ENCODE measurements at regions of chr6 and their contacts with region 1.

Region 1: DNA sequence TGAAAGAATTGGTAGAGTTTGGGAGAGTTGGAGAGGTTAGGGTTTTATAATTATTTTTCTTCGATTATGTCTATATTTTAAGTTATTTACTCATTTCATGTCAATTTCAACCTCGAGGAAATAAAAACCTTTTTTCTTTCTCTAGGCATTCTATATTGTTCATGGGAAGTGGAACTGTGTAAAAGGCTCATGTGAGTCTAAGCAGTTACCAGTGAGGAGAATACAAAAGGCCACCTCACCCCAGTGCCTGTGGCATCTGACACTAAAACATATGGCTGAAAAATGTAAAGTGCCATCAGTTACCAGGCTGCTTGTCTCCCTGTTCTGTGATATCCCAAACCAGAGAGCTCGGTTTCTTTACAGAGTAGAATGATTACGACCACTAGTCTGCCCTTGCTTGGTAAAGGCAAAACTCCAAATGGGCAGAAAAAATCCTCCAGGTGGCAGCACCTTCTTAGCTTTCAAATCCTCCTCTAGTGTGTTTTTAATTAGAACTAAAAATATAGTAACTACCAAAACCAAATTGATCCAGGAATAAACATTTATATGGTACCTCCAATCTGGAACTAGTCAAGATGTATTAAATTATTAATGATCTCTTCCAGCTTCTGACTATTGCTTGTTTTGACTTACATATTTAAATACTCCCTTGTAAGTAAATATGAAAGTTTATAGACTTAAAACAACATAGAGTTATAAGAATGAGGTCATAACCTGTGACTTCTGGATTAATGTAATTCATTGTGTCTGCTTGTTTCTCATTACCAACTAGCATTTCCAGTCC is 122.6 kb upstream of the MCHR2 start:
- DNase-seq: peak; percentile 68
- H3K4me3 ChIP-seq: no peak overlapping the region
- H3K27ac ChIP-seq: no peak overlapping the region
- H3K4me1 ChIP-seq: no peaks in the 10 kb centered on the region
- H3K27me3 ChIP-seq: peaks cover 5% of the 10 kb centered on the region
- CTCF ChIP-seq: peak; percentile 75

Region 2: DNA sequence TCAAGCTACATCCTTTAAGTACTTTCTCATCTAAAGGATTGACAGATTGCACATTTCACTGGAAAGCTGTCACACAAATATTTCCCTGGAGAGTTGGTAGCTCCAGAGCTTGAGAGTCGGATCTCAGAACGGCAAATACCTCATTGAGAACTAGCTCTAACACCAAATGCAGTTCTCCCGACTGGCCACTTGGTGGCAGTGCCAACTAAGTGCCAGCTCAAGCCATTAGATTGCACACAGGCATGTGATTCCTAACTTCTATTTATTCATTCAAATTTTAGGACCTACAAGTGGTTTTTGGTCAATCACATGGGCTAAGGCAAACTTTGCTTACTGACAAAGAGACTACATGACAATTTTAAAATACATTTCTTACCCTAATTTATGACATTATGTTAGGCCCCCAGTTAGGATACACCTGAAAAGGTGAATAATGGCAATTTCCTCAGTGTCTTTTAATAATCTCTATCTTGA is 114.7 kb before region 1 on chr6:
- CTCF ChIA-PET with region 1: no interaction called
- POLR2A ChIA-PET with region 1: no interaction called
- intact Hi-C with region 1: no loop called
- DNase-seq: peak; percentile 71
- H3K4me3 ChIP-seq: no peak overlapping the region
- H3K27ac ChIP-seq: no peak overlapping the region
- H3K4me1 ChIP-seq: no peaks in the 10 kb centered on the region
- H3K27me3 ChIP-seq: peaks cover 12% of the 10 kb centered on the region
- CTCF ChIP-seq: peak; percentile 90

Region 3: DNA sequence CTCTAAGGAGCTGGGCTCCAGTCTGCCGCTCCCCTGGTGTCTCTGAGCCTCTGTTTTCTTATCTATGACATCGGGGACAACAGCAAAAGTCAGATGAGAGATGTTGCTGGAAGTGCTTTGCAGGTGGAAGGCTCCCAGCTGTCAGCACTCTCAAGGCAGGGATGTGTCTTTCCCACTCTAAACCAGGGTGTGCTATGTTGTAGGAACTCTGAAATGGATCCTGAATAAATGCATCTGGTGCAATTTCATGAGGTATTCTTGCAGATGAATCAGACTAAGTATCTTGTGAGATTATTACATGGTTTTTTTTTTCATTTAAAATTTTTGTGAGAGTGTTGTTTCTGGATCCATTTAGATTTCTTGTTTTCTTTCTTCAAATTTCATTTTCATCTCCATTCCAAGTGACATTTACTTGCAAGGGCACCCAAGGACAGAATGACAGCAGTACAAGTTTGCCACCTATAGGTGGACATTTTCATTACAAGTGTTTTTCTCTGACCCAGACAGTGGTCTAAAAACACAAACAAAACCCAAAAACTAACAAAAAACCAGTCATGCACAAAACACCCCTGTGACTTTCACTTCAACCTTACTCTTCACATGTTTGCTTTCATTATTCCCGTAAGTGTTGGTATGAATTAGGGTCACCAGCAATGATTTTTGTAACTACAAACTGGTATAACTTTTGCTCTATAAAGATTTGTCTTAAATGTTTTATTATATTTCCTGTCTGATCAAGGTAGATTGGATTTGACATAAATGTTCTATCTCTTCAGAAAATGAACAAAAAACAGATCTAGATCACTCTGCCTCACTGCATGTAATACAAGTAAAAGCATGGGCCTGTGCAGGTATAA is 362.8 kb after region 1 on chr6:
- CTCF ChIA-PET with region 1: interaction called, 3 read pairs
- POLR2A ChIA-PET with region 1: no interaction called
- intact Hi-C with region 1: loop called (anchors 1 kb)
- DNase-seq: peak; percentile 49
- H3K4me3 ChIP-seq: no peak overlapping the region
- H3K27ac ChIP-seq: no peak overlapping the region
- H3K4me1 ChIP-seq: no peaks in the 10 kb centered on the region
- H3K27me3 ChIP-seq: no peaks in the 10 kb centered on the region
- CTCF ChIP-seq: peak; percentile 79

Region 4: GRCh38 chr6:100573167-100573566 is 456.6 kb after region 1 on chr6:
- CTCF ChIA-PET with region 1: no interaction called
- POLR2A ChIA-PET with region 1: no interaction called
- intact Hi-C with region 1: loop called (anchors 10 kb)
- DNase-seq: peak; percentile 51
- H3K4me3 ChIP-seq: no peak overlapping the region
- H3K27ac ChIP-seq: no peak overlapping the region
- H3K4me1 ChIP-seq: no peaks in the 10 kb centered on the region
- H3K27me3 ChIP-seq: no peaks in the 10 kb centered on the region
- CTCF ChIP-seq: peak; percentile 58

Region 5: DNA sequence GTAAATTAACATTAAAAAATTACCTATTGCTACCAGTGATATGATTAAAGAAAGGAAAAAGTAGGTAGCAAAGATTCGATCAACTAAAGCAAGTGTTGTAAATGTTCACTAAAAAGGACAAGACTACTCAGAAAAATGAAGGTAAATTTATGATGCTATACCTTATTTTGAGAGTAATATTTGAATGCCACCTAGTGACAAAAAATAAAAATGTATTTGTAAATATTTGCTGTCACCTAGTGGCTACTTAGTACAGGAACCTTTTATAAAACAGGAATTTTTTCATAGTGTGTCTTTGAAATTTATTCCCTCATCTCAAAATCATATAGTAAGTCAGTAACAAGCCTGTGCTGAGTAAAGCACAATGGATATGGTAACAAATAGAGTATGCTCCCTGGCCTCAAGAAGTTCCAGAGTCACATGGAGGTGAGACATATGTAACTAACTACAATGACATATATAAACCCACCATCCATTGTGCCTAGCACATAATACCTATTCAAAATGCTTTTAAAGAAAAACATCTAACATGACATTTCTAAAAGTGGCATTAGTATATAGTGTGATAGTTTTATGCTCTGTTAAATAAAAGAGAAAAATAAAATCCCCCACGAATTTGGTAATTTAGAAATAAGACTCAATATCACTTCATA is 541.2 kb after region 1 on chr6:
- CTCF ChIA-PET with region 1: no interaction called
- POLR2A ChIA-PET with region 1: no interaction called
- intact Hi-C with region 1: loop called (anchors 5 kb)
- DNase-seq: peak; percentile 44
- H3K4me3 ChIP-seq: no peak overlapping the region
- H3K27ac ChIP-seq: no peak overlapping the region
- H3K4me1 ChIP-seq: no peaks in the 10 kb centered on the region
- H3K27me3 ChIP-seq: no peaks in the 10 kb centered on the region
- CTCF ChIP-seq: peak; percentile 76

Region 6: DNA sequence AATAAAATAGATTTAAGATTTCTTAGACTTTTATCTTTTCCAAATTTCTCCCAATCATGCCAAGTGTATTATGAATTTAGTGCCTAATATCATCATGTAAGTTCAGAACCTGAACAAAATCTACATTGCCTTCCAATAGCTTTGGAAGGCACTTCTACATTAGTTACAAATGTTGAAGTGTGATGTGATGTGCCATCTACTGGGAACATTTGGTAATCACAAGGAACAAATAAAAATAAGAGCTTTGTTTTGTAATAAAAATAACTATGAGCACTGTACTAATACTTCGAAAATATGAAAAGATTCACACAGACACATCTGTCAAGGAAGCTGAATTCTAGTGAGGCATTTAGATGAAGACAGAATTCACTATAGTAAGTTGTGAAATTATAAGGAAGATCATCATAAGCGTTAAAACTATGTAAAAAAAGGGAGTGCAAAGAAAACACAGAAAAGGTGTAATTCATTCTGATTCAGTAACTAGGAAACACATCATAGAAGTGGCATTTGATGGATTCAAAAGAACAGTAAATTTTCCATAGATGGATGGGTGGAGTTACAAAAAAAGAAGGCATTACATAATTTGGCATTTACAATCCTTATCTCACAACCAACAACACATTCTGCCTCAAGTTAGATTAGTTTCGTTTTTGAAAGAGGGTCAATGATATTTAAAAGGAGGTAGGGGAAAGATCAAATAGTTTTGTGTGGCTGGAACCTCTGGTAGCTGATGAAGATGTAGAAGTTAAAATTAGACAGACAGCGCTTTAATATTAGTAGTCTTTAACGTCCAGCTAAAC is 603.5 kb after region 1 on chr6:
- CTCF ChIA-PET with region 1: no interaction called
- POLR2A ChIA-PET with region 1: no interaction called
- intact Hi-C with region 1: loop called (anchors 5 kb)
- DNase-seq: peak; percentile 51
- H3K4me3 ChIP-seq: no peak overlapping the region
- H3K27ac ChIP-seq: no peak overlapping the region
- H3K4me1 ChIP-seq: peaks cover 13% of the 10 kb centered on the region
- H3K27me3 ChIP-seq: no peaks in the 10 kb centered on the region
- CTCF ChIP-seq: peak; percentile 65